HEK293T (cell line): ENCODE measurements at regions of chr11 and their contacts with region 1.

Region 1: DNA sequence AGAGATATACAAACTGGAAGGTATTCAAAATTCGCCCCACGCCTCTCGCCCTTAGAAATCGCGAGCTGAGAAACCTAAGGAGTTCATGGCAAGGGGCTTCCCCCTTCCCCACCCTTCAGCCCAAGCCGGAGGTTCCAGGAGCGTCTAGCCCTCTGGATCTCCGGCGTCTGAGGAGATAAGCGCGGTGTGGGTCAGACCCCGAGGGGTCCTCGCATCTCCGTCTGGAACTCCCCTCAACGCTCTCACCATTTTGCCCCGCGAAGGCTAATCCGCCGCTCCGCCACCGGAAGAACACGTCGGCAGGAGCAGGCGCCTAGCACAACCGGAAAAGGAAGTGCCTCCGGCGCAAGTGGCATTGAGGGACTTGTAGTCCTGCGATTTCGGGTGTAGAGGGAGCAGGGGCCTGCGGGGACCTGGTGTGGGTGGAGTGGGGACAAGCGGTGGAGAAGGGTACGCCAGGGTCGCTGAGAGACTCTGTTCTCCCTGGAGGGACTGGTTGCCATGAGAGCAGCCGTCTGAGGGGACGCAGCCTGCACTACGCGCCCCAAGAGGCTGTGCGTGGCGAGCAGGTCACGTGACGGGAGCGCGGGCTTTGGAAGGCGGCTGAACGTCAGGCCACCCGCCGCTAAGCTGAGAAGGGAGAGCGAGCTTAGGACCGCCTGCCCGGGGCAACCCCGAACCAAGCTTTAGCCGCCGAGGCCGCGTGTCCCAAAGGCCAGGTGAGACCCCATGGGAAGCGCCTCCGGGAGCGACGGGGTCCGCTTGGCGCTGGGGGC is at the starts of genes FEN1 and TMEM258:
- DNase-seq: peak; percentile 90

Region 2: DNA sequence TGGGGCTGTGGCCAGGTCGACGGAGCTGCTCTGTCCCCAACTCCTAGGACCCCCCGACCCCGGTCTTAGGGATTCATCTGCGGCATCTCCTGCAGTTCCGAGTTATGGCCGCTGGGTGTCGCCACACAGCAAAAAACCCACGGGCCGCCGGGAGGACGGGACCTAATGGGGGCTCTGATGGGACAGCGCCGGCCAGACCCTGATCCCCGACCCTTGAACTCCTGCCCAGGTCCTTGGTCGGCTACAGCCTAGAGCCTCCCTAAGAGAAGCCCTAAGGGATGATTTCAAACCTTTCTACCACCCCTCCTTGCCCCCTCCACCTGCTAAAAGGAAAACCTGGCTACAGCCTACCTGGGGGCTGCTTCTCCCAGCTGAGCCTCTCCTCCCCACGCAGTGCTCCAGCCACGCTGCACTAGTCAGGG is 314.8 kb before region 1 on chr11:
- CTCF ChIA-PET with region 1: no interaction called
- POLR2A ChIA-PET with region 1: no interaction called
- DNase-seq: peak; percentile 77

Region 3: GRCh38 chr11:61747192-61747966 is 45.1 kb before region 1 on chr11:
- CTCF ChIA-PET with region 1: interaction called, 17 read pairs
- POLR2A ChIA-PET with region 1: interaction called, 5 read pairs
- DNase-seq: peak; percentile 83

Region 4: GRCh38 chr11:61816736-61817455 is 24.4 kb after region 1 on chr11 and contains the start of gene FADS1:
- CTCF ChIA-PET with region 1: interaction called, 15 read pairs
- POLR2A ChIA-PET with region 1: interaction called, 27 read pairs
- DNase-seq: peak; percentile 88

Region 5: DNA sequence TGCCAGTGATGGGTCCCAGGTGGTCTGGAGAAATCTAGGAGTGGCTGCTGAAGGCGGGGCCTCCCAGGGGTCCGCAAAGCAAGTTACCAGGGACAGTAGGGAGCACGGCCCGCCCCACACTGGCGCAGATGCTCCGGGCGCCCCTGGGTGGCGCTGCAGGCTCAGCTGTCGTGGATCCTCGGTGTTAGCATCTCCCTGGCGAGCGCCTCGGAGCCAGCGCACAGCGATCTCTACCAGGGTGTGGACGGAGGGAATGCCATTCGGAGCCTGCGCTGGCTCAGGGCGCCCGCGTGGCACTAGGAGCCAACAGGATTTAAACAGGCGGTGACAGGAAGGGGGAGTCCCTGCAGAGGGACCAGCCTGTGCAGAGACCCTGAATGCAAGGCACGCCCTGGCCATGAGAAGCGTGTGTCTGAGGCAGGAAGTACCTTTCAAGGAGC is 78.7 kb after region 1 on chr11:
- CTCF ChIA-PET with region 1: interaction called, 12 read pairs
- POLR2A ChIA-PET with region 1: no interaction called
- DNase-seq: peak; percentile 91